Posterior cingulate gyrus (tissue), 11 donors: ENCODE measurements at regions of chr10 and their contacts with region 1.

Region 1: DNA sequence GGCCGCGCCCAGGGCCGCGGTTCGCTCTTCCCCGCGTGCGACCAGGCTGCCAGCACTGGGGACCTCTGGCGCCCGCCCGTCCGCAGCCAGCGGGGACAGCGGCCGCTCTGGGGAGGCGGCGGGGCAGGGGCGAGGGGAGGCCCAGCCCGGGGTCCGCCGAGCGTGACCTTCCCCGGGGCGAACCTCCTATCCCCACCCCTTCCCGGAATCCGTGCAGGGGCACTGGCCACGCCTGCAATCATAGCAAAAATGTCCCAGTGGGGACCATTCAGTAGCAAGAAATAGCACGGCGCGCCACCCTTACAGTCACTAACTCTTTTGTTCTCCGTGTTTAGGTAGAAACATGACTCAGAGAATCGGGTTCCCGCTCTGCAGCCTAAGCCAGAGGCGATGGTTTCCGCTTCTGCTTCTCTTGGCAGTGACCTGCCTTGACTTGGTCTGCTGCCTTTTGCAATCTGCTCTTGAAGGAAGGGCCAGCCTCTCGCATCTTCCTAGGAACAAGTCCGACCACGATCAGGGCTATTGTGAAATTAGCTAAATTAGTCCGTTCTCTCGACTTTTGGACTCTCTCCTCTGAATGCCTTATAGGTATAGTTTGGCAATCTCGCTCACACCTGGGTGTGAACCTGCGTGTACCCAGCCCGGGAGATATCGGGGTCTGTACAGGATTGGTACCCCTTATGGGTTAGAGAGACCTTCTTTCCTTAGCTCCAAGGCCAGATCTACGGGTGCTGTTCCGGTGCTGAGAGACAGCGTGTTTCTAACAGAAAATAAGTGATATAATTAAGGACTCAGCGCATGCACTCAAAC is 79.4 kb upstream of the ACBD5 start:
- DNase-seq: peak in 5 of 10 donors; percentile 17 to 83 (median 39)

Region 2: GRCh38 chr10:26627324-26627723 is 692.6 kb before region 1 on chr10:
- intact Hi-C with region 1: loop called (anchors 5 kb)
- DNase-seq: no peak

Region 3: GRCh38 chr10:26960308-26960707 is 359.6 kb before region 1 on chr10:
- intact Hi-C with region 1: no loop called
- DNase-seq: no peak